Naive thymus-derived CD4-positive, alpha-beta T cell (primary cell): ENCODE measurements at regions of chr16 and their contacts with region 1.

Region 1: GRCh38 chr16:4307215-4308037 is 8.4 kb upstream of the GLIS2 start:
- DNase-seq: peak; percentile 97 to 98 (median 97)
- ATAC-seq: peak; percentile 96
- H3K4me3 ChIP-seq: peak overlapping the region; percentile 94
- H3K4me3 Mint-ChIP-seq: peak overlapping the region; percentile 90 to 98 (median 94)
- H3K27ac ChIP-seq: peak overlapping the region; percentile 90
- H3K27ac Mint-ChIP-seq: peak overlapping the region; percentile 94 to 99 (median 95)
- H3K4me1 ChIP-seq: peaks cover 15 to 17% of the 10 kb centered on the region in 2 donors
- H3K4me1 Mint-ChIP-seq: peaks cover 13 to 30% (median 23%) of the 10 kb centered on the region in 7 donors
- H3K27me3 ChIP-seq: no peaks in the 10 kb centered on the region
- H3K27me3 Mint-ChIP-seq: peaks cover 0 to 2% (median 0%) of the 10 kb centered on the region in 5 donors

Region 2: DNA sequence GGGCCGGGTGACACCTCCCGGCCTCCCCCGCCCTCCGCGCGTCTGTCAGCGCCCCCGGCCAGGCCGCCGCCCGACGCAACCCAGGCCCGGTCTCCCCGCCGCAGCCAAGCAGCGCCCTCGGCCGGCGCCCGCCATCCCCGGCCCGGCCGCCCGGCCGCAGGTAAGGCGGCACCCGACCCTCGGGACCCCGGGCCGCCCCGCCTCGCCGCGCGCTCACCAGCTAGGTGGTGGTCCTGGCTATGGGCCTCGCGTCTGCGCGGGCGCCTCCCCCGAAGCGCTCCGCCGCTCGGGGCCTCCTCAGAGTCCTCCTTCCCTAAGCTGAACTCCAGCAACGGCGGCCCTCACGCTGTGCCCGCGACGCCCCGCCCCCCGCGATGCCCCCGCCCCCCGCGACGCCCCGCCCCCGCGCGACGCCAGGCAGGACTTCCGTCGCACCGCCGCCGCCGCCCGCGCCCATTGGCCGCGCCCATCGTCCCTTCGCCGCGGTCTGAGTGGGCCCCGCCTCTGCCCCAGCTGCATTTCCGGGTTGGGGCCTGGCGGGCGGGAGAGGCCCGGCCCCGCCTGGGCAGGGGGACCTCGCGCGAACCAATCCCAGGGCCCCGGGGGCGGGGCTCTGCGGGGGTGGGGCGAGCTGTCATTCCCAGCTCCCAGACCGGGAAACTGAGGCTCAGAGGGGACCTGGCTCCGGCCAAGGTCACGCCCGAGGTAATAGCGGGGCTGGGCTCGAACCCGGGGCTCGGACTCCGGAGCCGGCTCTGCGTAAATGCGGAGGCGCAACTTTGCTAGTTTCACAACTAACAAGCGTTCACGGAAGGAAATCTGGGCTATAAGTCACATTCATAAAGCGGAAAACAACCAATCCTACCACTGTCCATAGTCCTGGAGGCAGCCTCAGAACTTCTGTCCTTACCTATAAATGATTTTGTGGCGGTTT is 1634.1 kb before region 1 on chr16:
- CTCF ChIA-PET with region 1: no interaction called
- POLR2A ChIA-PET with region 1: no interaction called
- intact Hi-C with region 1: loop called in 1 of 2 experiments (anchors 5 kb)
- DNase-seq: peak; percentile 89 to 97 (median 96)
- ATAC-seq: peak; percentile 97
- H3K4me3 ChIP-seq: peak overlapping the region; percentile 75
- H3K4me3 Mint-ChIP-seq: peak overlapping the region; percentile 68 to 90 (median 86)
- H3K27ac ChIP-seq: peak overlapping the region; percentile 75
- H3K27ac Mint-ChIP-seq: peak overlapping the region in 8 of 9 donors; percentile 68 to 89 (median 82)
- H3K4me1 ChIP-seq: peaks cover 8 to 9% of the 10 kb centered on the region in 2 donors
- H3K4me1 Mint-ChIP-seq: peaks cover 12 to 45% (median 34%) of the 10 kb centered on the region in 7 donors
- H3K27me3 ChIP-seq: no peaks in the 10 kb centered on the region
- H3K27me3 Mint-ChIP-seq: no peaks in the 10 kb centered on the region

Region 3: DNA sequence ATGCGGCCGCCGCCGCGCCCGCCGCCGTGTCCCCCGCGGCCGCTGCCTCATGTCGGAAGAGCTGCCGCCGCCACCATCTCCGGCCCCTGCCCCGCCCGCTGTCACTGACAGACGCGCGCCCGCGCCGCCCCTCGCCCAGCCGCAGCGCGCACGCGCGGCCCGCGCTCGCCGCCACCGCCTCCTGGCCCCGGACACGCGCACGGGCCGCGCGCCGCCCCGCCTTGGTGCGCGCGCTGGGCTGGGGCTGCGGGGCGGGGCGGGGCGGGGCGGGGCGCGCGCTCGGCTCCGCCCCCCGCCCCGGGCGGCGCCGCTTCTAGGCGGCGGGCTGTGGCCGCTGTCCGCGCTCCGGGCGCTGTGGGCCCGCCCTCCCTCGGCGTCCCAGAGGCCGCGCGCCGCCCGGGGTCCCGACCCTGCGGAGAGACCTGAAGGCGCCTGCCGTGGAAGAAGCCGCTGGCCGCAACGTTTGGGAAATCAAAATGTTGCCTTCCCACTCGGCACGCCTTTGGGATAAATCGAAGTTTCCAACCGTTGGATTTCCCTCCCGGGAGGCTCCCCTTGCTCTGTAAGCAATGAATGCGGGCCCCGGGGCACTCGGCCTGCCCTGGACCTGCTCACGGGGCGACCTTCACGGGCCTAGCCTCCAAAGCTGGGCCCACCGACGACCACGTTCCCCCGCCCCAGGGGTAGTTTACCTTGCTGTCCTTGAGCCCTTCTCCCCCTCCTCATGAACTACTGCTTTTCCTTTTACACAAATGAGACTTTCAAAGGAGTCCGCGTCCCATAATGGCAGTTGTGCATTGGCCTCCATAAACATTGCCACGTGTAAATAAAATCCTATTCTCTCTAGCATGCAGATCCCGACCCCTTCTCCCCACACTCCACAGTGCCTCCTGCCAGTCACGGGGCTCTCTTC is 190.8 kb before region 1 on chr16 and contains the start of gene ADCY9:
- CTCF ChIA-PET with region 1: no interaction called
- POLR2A ChIA-PET with region 1: no interaction called
- intact Hi-C with region 1: loop called in 1 of 2 experiments (anchors 2 kb)
- DNase-seq: peak; percentile 67 to 89 (median 78)
- ATAC-seq: peak; percentile 95
- H3K4me3 ChIP-seq: peak within 1 kb of the TSS; percentile 65
- H3K4me3 Mint-ChIP-seq: peak within 1 kb of the TSS; percentile 79 to 94 (median 88)
- H3K27ac ChIP-seq: peak within 1 kb of the TSS; percentile 14
- H3K27ac Mint-ChIP-seq: peak within 1 kb of the TSS in 8 of 9 donors; percentile 25 to 82 (median 70)
- H3K4me1 ChIP-seq: peaks cover 13 to 19% of the 10 kb centered on the region in 2 donors
- H3K4me1 Mint-ChIP-seq: peaks cover 31 to 41% (median 38%) of the 10 kb centered on the region in 7 donors
- H3K27me3 ChIP-seq: no peaks in the 10 kb centered on the region
- H3K27me3 Mint-ChIP-seq: peaks cover 0 to 26% (median 0%) of the 10 kb centered on the region in 5 donors
- total RNA-seq, gene ADCY9: 3.9 to 14.3 (median 5.6) TPM

Region 4: GRCh38 chr16:4271176-4272066 is 36.0 kb before region 1 on chr16:
- CTCF ChIA-PET with region 1: interaction called, 3 read pairs
- POLR2A ChIA-PET with region 1: interaction called, 19 read pairs
- intact Hi-C with region 1: loop called (anchors 1 kb)
- DNase-seq: peak; percentile 68 to 90 (median 84)
- ATAC-seq: peak; percentile 89
- H3K4me3 ChIP-seq: peak overlapping the region; percentile 99
- H3K4me3 Mint-ChIP-seq: peak overlapping the region; percentile 85 to 97 (median 92)
- H3K27ac ChIP-seq: peak overlapping the region; percentile 58
- H3K27ac Mint-ChIP-seq: peak overlapping the region; percentile 67 to 98 (median 83)
- H3K4me1 ChIP-seq: peaks cover 5 to 13% of the 10 kb centered on the region in 2 donors
- H3K4me1 Mint-ChIP-seq: peaks cover 8 to 23% (median 15%) of the 10 kb centered on the region in 7 donors
- H3K27me3 ChIP-seq: no peaks in the 10 kb centered on the region
- H3K27me3 Mint-ChIP-seq: no peaks in the 10 kb centered on the region

Region 5: GRCh38 chr16:4330277-4330874 is 22.9 kb after region 1 on chr16:
- CTCF ChIA-PET with region 1: interaction called, 22 read pairs
- POLR2A ChIA-PET with region 1: interaction called, 4 read pairs
- intact Hi-C with region 1: loop called (anchors 1 kb)
- DNase-seq: peak; percentile 39 to 82 (median 58)
- ATAC-seq: peak; percentile 80
- H3K4me3 ChIP-seq: no peak overlapping the region
- H3K4me3 Mint-ChIP-seq: no peak overlapping the region
- H3K27ac ChIP-seq: no peak overlapping the region
- H3K27ac Mint-ChIP-seq: peak overlapping the region in 1 of 9 donors; percentile 40
- H3K4me1 ChIP-seq: peaks cover 0 to 3% of the 10 kb centered on the region in 2 donors
- H3K4me1 Mint-ChIP-seq: peaks cover 0 to 4% (median 0%) of the 10 kb centered on the region in 7 donors
- H3K27me3 ChIP-seq: no peaks in the 10 kb centered on the region
- H3K27me3 Mint-ChIP-seq: peaks cover 0 to 15% (median 0%) of the 10 kb centered on the region in 5 donors

Region 6: GRCh38 chr16:4402439-4403132 is 95.2 kb after region 1 on chr16:
- CTCF ChIA-PET with region 1: no interaction called
- POLR2A ChIA-PET with region 1: no interaction called
- intact Hi-C with region 1: no loop called
- DNase-seq: peak in 8 of 9 donors; percentile 33 to 76 (median 64)
- ATAC-seq: peak; percentile 61
- H3K4me3 ChIP-seq: no peak overlapping the region
- H3K4me3 Mint-ChIP-seq: peak overlapping the region in 1 of 10 donors; percentile 13
- H3K27ac ChIP-seq: no peak overlapping the region
- H3K27ac Mint-ChIP-seq: peak overlapping the region in 4 of 9 donors; percentile 14 to 66 (median 28)
- H3K4me1 ChIP-seq: no peaks in the 10 kb centered on the region
- H3K4me1 Mint-ChIP-seq: peaks cover 9 to 29% (median 19%) of the 10 kb centered on the region in 7 donors
- H3K27me3 ChIP-seq: no peaks in the 10 kb centered on the region
- H3K27me3 Mint-ChIP-seq: no peaks in the 10 kb centered on the region

Region 7: DNA sequence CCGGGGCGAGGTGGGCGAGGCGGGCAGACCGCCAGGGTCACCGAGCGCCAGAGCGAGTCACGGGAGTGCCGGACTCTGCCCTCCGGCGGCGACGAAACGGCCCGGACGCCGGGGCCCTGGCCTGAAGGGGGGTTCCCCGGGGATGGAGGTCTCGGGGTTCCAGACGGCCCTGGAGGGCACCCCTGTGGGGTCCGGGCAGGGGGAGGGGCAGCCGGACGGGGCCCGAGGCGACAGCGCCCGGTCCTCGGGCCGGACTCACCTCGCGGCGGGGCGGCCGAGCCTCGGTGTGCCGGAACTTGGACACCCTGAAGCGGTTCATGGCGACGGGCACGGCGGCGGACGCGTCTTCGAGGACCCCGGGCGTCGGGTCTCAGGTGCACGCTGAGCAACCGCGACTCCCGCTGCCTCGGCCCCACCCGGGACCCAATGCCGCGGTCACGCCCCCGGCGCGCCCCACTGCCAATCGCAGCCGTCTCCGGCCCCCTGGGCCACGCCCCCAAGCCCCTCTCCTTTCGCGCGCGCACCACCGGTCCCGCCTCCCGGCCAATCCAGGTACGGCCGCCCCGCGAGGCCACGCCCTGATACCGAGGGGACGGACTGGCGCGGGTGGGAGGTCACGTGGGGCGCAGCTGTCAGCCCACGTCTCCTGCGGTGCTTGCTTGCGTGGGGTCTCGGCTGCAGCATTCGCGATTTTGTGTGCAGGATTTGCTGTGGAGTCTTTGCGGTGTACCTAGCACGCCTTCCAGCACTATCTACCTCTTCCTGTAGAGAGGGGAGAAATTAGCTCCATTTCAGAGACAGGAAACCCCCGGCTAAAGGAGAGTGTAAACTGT is 109.0 kb after region 1 on chr16 and contains the start of gene CORO7:
- CTCF ChIA-PET with region 1: interaction called, 3 read pairs
- POLR2A ChIA-PET with region 1: no interaction called
- intact Hi-C with region 1: loop called (anchors 1 to 2 kb)
- DNase-seq: peak; percentile 98 to 100 (median 99)
- ATAC-seq: peak; percentile 89
- H3K4me3 ChIP-seq: peak within 1 kb of the TSS; percentile 71
- H3K4me3 Mint-ChIP-seq: peak within 1 kb of the TSS; percentile 88 to 98 (median 95)
- H3K27ac ChIP-seq: peak within 1 kb of the TSS; percentile 98
- H3K27ac Mint-ChIP-seq: peak within 1 kb of the TSS; percentile 91 to 99 (median 98)
- H3K4me1 ChIP-seq: peaks cover 26 to 33% of the 10 kb centered on the region in 2 donors
- H3K4me1 Mint-ChIP-seq: peaks cover 18 to 43% (median 38%) of the 10 kb centered on the region in 7 donors
- H3K27me3 ChIP-seq: no peaks in the 10 kb centered on the region
- H3K27me3 Mint-ChIP-seq: peaks cover 0 to 9% (median 0%) of the 10 kb centered on the region in 5 donors
- total RNA-seq, gene CORO7: 114 to 572 (median 165) TPM

Region 8: DNA sequence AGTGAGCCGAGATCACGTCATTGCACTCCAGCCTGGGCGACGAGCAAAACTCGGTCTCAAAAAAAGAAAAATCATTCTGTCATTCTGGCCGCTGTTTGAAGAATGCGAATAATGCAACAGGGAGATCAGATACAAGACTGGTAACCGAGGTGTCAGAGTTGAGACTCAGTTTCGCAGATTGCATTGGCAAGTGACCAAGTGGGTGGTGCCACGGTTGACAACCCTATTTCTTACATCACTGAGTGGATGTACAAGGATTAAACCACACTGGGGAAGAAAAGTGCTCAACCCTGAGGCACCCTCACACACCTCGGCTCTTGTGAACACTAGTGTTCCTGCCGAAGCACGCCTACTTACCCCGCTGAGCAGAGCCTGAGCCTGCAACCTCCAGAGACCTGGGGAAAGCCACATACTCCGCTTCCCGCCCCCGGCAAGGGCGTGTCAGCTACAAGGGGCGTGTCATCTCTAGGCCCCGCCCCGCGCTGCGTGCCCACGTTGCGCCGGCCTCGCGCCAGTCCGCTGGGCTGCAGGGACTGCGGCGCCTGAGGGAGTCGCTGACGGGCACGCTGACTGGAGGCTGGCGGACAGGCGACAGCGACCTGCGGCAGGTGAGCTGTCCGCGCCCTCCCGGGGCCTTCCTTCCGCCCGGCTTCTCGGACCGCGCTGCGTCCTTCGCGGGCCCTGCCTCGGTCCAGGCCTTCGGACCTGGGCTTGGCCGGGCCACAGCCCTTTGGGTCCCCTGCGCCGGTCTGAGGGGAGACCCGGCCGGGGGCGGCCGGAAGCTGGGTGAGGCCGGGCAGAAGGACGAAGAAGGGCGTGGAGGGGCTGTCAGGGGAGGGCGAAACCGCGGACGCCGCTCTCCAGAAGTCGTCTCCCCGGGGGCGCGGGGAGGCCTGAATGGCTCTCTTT is 168.7 kb after region 1 on chr16 and contains the start of gene HMOX2:
- CTCF ChIA-PET with region 1: no interaction called
- POLR2A ChIA-PET with region 1: no interaction called
- intact Hi-C with region 1: loop called in 1 of 2 experiments (anchors 1 kb)
- DNase-seq: peak; percentile 85 to 98 (median 92)
- ATAC-seq: peak; percentile 95
- H3K4me3 ChIP-seq: peak within 1 kb of the TSS; percentile 89
- H3K4me3 Mint-ChIP-seq: peak within 1 kb of the TSS; percentile 90 to 96 (median 94)
- H3K27ac ChIP-seq: peak within 1 kb of the TSS; percentile 92
- H3K27ac Mint-ChIP-seq: peak within 1 kb of the TSS; percentile 83 to 95 (median 91)
- H3K4me1 ChIP-seq: peaks cover 29 to 38% of the 10 kb centered on the region in 2 donors
- H3K4me1 Mint-ChIP-seq: peaks cover 25 to 53% (median 40%) of the 10 kb centered on the region in 7 donors
- H3K27me3 ChIP-seq: no peaks in the 10 kb centered on the region
- H3K27me3 Mint-ChIP-seq: no peaks in the 10 kb centered on the region
- total RNA-seq, gene HMOX2: 44.6 to 84.9 (median 61.0) TPM